ENCODE measurements at regions of chr6 and their contacts with region 1.

Region 1: GRCh38 chr6:132962936-132963868 is 148.8 kb downstream of the RPS12 start:
- DNase-seq: peak; percentile 42
- H3K4me3 ChIP-seq: no peak overlapping the region
- H3K27ac ChIP-seq: no peak overlapping the region
- H3K4me1 ChIP-seq: peaks cover 4% of the 10 kb centered on the region
- H3K27me3 ChIP-seq: peaks cover under 1% of the 10 kb centered on the region
- CTCF ChIP-seq: peak; percentile 84 to 88

Region 2: DNA sequence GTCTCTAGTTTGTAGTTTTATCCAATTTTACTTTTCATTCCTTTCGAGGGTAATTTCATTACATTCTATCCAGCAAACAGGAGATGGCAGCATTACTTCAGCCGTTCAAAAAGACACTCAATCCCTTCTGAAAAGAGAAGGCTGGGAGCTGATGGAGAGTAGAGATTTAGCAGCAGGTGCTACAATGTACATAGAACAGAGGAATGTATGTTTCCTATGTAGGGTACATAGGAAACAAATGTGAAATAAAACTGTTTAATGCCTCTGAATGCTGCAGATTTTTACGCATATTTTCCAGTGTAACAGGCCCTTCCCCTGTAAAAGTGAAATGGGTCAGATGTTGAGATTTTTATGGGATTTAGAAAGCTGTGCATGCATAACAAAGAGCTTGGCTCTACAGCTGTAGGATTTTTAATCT is 132.9 kb before region 1 on chr6:
- CTCF ChIA-PET with region 1: interaction called, 4 read pairs
- dilution Hi-C with region 1: no loop called
- in situ Hi-C with region 1: no loop called
- intact Hi-C with region 1: loop called (anchors 2 kb)
- DNase-seq: no peak
- H3K4me3 ChIP-seq: no peak overlapping the region
- H3K27ac ChIP-seq: no peak overlapping the region
- H3K4me1 ChIP-seq: no peaks in the 10 kb centered on the region
- H3K27me3 ChIP-seq: no peaks in the 10 kb centered on the region
- CTCF ChIP-seq: peak; percentile 38 to 66

Region 3: DNA sequence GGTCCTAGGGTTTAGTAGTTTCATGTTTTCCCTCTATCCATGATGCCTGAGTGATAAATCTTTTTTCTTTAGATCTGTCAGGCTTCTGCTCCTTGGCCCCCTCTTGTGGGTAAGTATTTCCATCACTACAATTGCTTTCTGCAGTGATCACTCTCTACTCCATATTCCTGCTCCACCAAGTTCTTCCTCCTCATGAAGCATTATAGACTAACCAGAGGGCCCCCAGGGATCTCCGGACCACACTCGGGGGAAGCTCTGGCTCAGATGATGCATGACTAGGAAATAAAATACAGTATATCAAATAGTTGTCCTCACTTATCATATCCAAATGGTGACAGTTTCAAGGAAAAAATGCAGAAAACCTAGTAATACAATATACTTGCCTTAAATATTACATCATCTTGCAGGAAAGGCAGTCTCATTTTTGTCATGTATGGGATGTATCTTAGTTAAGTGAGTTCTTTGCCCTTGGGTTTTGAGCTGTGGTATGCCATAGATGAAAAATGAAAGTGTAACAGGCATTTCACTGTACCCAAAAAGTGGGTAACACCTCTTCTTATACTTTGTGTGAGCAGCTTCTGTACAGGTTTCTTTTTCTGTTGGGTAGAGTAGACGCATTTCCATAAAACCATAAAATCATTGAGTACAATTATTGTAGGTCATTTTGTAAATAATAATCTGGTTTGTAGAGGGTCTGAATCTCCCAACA is 77.0 kb after region 1 on chr6:
- CTCF ChIA-PET with region 1: no interaction called
- dilution Hi-C with region 1: no loop called
- in situ Hi-C with region 1: no loop called
- intact Hi-C with region 1: loop called (anchors 2 kb)
- DNase-seq: peak; percentile 6
- H3K4me3 ChIP-seq: no peak overlapping the region
- H3K27ac ChIP-seq: no peak overlapping the region
- H3K4me1 ChIP-seq: no peaks in the 10 kb centered on the region
- H3K27me3 ChIP-seq: peaks cover 2% of the 10 kb centered on the region
- CTCF ChIP-seq: peak; percentile 29 to 64

Region 4: DNA sequence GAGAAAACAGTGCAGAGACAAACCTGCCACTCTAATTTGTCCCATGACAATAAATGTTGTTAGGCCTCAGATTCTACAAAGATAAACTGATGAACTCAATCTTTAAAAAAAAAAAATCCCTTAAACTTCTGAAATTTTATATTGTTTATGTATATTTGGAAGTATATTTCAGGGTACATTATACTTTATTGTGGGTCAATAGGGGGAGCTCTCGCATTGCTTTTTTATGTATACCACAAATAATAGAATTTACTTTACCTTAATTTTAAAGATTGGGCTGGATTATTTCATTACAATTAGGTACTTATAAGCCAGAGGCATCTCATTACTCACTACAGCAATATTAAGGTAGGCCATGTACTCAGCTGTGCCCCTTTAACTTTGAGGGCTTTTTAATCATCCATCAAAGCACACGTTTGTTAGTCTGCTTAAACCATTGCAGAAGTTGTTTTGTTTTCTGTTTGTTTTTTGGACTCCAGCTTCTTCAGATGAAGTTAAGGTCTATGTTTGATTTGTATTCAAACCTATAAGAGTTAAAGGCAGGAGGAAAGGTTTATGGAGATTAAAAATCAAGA is 221.7 kb after region 1 on chr6:
- CTCF ChIA-PET with region 1: interaction called, 3 read pairs
- dilution Hi-C with region 1: no loop called
- in situ Hi-C with region 1: no loop called
- intact Hi-C with region 1: loop called (anchors 2 kb)
- DNase-seq: no peak
- H3K4me3 ChIP-seq: no peak overlapping the region
- H3K27ac ChIP-seq: no peak overlapping the region
- H3K4me1 ChIP-seq: no peaks in the 10 kb centered on the region
- H3K27me3 ChIP-seq: peaks cover 7% of the 10 kb centered on the region
- CTCF ChIP-seq: peak; percentile 54

Region 5: DNA sequence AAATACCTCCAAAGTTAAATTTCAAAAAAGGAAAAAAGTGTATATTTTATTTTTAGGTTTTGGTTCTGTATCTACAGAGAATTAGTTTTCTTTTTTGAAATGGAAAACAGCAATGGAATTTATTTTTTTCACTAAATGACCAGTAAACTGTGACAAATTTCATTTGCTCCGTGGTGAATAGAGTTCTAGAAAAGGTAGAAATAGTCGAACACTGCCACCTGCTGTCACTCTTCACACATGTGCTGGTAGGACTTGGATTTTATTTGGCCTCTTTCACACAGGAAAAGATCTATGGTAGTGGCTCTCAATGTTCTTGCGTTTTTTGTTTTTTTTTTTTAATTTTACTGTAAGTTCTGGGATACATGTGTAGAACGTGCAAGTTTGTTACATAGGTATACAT is 590.5 kb after region 1 on chr6:
- CTCF ChIA-PET with region 1: no interaction called
- dilution Hi-C with region 1: no loop called
- in situ Hi-C with region 1: no loop called
- intact Hi-C with region 1: loop called (anchors 2 kb)
- DNase-seq: peak; percentile 15
- H3K4me3 ChIP-seq: no peak overlapping the region
- H3K27ac ChIP-seq: no peak overlapping the region
- H3K4me1 ChIP-seq: no peaks in the 10 kb centered on the region
- H3K27me3 ChIP-seq: peaks cover 6% of the 10 kb centered on the region
- CTCF ChIP-seq: peak; percentile 61 to 73

Measured in mammary epithelial cell (primary cell).